Activated CD4-positive, alpha-beta memory T cell treated with anti-CD3 and anti-CD28 coated beads, Interleukin-2, amount 10 ng/mL, durations not matched to agents 7 days and 5 days (primary cell): ENCODE measurements at regions of chr5 and their contacts with region 1.

Region 1: DNA sequence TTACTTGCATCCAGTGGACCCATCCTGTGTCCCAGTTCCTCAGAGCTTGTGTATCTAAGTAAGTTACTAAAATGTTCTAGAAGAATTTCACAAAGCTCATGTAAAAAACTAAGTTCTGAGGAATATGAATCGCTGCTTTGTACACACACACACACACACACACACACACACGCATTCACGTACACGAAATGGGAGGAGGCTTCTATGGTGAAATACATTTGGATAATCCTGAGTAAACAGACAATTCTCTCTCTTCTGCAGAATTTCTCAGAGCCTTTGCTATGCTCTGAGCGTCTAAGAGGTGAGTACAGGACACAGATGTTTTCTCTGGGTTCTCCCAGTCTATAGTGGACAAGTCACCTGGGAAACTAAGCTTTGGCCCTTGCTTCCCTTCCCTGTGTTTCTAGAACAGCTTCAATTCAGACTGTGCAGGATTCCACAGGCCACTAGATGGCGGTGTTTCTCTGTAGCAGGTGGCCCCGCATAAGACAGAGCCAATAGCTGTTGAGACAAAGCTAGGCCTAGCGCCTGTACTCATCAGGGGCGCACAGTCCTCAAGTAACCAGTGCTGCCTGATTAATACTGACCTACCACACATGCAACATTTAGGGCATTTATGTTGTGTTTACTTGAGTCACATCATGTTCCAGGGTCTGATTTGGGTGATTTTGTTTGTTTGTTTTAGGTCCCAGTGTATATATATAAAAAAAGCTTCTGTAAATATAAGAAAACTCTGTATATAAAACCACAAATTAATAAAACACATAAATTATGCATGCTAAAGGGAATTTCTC is 114.8 kb downstream of the LIFR start:
- DNase-seq: peak; percentile 85
- H3K4me3 Mint-ChIP-seq: no peak overlapping the region
- H3K27ac Mint-ChIP-seq: no peak overlapping the region
- H3K4me1 Mint-ChIP-seq: no peaks in the 10 kb centered on the region
- H3K27me3 Mint-ChIP-seq: peaks cover 35% of the 10 kb centered on the region

Region 2: DNA sequence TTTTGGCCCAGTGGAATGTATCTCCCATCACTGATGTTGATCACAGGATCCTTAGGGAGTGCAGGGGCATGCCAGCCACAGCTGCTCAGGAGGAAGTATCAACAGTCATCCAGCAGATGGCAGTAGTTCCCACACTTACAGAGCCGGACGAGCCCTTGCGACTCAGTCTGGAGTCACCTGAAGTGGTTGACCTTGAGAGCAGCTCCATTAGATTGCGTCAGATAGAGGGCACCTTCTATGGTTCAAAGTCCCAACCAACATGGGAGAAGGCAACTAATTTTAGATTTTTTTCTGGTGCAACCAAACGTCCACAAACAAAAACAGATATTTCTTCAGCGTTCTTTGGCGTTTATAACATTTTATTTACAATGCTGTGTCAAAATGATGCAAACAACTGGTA is 58.8 kb before region 1 on chr5:
- CTCF ChIA-PET with region 1: interaction called, 11 read pairs
- POLR2A ChIA-PET with region 1: no interaction called
- DNase-seq: peak; percentile 52
- H3K4me3 Mint-ChIP-seq: no peak overlapping the region
- H3K27ac Mint-ChIP-seq: no peak overlapping the region
- H3K4me1 Mint-ChIP-seq: no peaks in the 10 kb centered on the region
- H3K27me3 Mint-ChIP-seq: peaks cover 20% of the 10 kb centered on the region

Region 3: DNA sequence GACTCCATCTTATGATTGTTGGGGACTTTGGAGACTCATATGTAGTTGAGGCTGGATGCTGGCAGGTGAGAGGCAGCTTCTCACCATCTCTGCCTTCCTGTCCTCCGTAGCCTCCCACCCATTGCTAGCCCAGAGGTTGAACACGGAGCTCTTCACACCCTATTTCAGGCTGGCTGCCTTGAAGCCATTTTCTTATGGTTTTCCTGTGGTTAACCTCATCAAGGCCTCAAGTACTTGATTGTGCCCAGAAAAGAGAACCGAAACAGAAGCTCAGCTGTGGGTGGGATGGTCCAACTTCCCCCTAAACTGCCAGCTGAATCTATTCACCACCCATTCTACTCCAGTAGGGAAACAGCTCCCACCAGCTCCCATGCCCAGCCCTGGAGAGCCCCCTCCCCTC is 11.9 kb after region 1 on chr5:
- CTCF ChIA-PET with region 1: interaction called, 57 read pairs
- POLR2A ChIA-PET with region 1: interaction called, 5 read pairs
- DNase-seq: peak; percentile 73
- H3K4me3 Mint-ChIP-seq: no peak overlapping the region
- H3K27ac Mint-ChIP-seq: peak overlapping the region; percentile 58
- H3K4me1 Mint-ChIP-seq: peaks cover 25% of the 10 kb centered on the region
- H3K27me3 Mint-ChIP-seq: peaks cover 86% of the 10 kb centered on the region

Region 4: GRCh38 chr5:38540314-38540713 is 98.7 kb after region 1 on chr5:
- CTCF ChIA-PET with region 1: interaction called, 13 read pairs
- POLR2A ChIA-PET with region 1: no interaction called
- DNase-seq: no peak
- H3K4me3 Mint-ChIP-seq: no peak overlapping the region
- H3K27ac Mint-ChIP-seq: no peak overlapping the region
- H3K4me1 Mint-ChIP-seq: no peaks in the 10 kb centered on the region
- H3K27me3 Mint-ChIP-seq: peaks cover 24% of the 10 kb centered on the region

Region 5: GRCh38 chr5:38666668-38667498 is 225.2 kb after region 1 on chr5:
- CTCF ChIA-PET with region 1: interaction called, 11 read pairs
- POLR2A ChIA-PET with region 1: no interaction called
- DNase-seq: no peak
- H3K4me3 Mint-ChIP-seq: no peak overlapping the region
- H3K27ac Mint-ChIP-seq: no peak overlapping the region
- H3K4me1 Mint-ChIP-seq: no peaks in the 10 kb centered on the region
- H3K27me3 Mint-ChIP-seq: peaks cover 10% of the 10 kb centered on the region

Region 6: DNA sequence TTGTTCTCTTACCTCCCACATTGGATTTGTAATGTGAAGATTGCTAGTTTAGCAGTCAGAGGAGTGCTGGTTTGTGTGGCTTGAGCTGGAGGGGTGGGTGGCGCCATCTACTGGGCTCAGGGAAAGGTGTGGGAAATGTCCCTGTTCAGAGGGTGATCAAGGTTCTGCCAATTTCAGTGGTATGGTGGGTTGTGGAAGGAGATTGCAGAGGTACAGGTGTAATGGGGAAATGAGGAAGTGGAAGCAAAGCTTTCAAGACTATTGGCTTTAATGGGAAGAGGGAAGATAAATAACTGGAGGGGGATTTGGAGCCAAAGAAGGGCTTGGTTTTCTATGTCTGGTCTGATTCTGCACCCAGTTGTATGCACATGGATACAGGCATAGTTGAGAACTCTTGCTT is 480.5 kb after region 1 on chr5:
- CTCF ChIA-PET with region 1: interaction called, 31 read pairs
- POLR2A ChIA-PET with region 1: no interaction called
- DNase-seq: peak; percentile 58
- H3K4me3 Mint-ChIP-seq: no peak overlapping the region
- H3K27ac Mint-ChIP-seq: no peak overlapping the region
- H3K4me1 Mint-ChIP-seq: no peaks in the 10 kb centered on the region
- H3K27me3 Mint-ChIP-seq: peaks cover 26% of the 10 kb centered on the region